ENCODE measurements at regions of chr12 and their contacts with region 1.

Region 1: GRCh38 chr12:31406345-31406744 is 80.4 kb upstream of the SINHCAF start:
- DNase-seq: peak; percentile 11
- ATAC-seq: no peak
- H3K4me3 ChIP-seq: no peak overlapping the region
- H3K27ac ChIP-seq: no peak overlapping the region
- H3K4me1 ChIP-seq: no peaks in the 10 kb centered on the region
- H3K27me3 ChIP-seq: no peaks in the 10 kb centered on the region
- CTCF ChIP-seq: no peak
- POLR2A ChIP-seq: no peak
- RAD21 ChIP-seq: no peak

Region 2: GRCh38 chr12:31245822-31246469 is 160.4 kb before region 1 on chr12:
- CTCF ChIA-PET with region 1: no interaction called
- POLR2A ChIA-PET with region 1: no interaction called
- dilution Hi-C with region 1: no loop called
- in situ Hi-C with region 1: no loop called
- intact Hi-C with region 1: loop called (anchors 2 kb)
- DNase-seq: no peak
- ATAC-seq: no peak
- H3K4me3 ChIP-seq: no peak overlapping the region
- H3K27ac ChIP-seq: no peak overlapping the region
- H3K4me1 ChIP-seq: no peaks in the 10 kb centered on the region
- H3K27me3 ChIP-seq: peaks cover 20% of the 10 kb centered on the region
- CTCF ChIP-seq: peak; percentile 13; the same call in 1 of the 2 replicates
- POLR2A ChIP-seq: no peak
- RAD21 ChIP-seq: no peak

Region 3: DNA sequence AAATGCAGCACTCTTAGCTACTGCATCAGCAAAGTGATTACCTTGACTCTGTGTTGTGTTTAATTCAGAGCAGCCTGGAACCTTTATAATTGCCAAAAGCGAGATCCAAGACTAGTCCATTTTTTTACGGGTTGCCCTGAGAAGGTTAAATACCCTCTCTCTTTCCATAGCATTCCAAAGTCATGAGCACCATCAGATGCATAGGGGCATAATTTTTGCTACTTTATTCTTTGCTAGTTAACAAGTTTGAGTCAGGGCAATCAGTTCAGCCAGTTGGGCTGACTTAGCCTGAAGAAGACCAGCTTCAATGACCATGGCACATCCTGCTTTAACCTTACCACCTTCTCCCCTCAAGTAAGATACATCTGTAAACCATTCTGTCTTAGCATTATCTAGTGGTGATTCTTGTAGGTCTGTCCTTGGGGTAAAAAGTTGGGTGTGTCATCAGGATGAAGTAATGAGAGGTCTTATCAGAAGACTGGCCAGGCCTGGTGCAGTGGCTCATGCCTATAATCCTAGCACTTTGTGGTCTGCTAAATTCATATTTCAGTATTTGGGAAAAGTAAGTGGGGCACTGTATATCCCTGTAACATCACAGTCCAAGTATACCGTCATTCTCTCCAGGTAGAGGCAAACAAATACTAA is 99.6 kb before region 1 on chr12:
- CTCF ChIA-PET with region 1: no interaction called
- POLR2A ChIA-PET with region 1: no interaction called
- dilution Hi-C with region 1: no loop called
- in situ Hi-C with region 1: no loop called
- intact Hi-C with region 1: no loop called
- DNase-seq: peak; percentile 7
- ATAC-seq: no peak
- H3K4me3 ChIP-seq: no peak overlapping the region
- H3K27ac ChIP-seq: no peak overlapping the region
- H3K4me1 ChIP-seq: no peaks in the 10 kb centered on the region
- H3K27me3 ChIP-seq: no peaks in the 10 kb centered on the region
- CTCF ChIP-seq: no peak
- POLR2A ChIP-seq: no peak
- RAD21 ChIP-seq: no peak

Region 4: GRCh38 chr12:31325877-31326631 is 80.3 kb before region 1 on chr12 and contains the start of gene SINHCAF:
- CTCF ChIA-PET with region 1: no interaction called
- POLR2A ChIA-PET with region 1: no interaction called
- dilution Hi-C with region 1: no loop called
- in situ Hi-C with region 1: no loop called
- intact Hi-C with region 1: loop called (anchors 2 kb)
- DNase-seq: peak; percentile 96
- ATAC-seq: peak; percentile 71
- H3K4me3 ChIP-seq: peak within 1 kb of the TSS; percentile 71
- H3K27ac ChIP-seq: peak within 1 kb of the TSS; percentile 79
- H3K4me1 ChIP-seq: no peaks in the 10 kb centered on the region; the same call in 1 of the 2 replicates
- H3K27me3 ChIP-seq: no peaks in the 10 kb centered on the region
- CTCF ChIP-seq: no peak
- POLR2A ChIP-seq: peak; percentile 79; the same call in 1 of the 2 replicates
- RAD21 ChIP-seq: no peak
- total RNA-seq, gene SINHCAF: 30.8 and 43.3 TPM in 2 replicates

Region 5: DNA sequence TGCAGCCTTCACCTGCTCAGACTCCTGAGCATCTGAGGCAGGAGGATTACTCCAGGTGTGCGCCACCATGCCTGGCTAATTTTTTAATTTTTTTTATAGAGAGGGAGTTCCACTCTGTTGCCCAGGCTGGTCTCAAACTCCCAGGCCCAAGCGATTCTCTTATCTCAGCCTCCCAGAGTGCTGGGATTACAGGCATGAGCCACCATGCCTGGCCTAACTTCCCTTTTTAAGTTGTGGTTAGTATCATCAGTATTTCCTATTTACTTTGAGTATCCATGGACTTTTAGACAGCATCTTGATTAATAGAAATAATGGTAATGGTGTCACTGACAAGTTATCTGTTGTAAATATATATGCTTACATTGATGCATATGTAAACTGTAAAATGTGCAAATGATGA is 1109.9 kb after region 1 on chr12:
- CTCF ChIA-PET with region 1: no interaction called
- POLR2A ChIA-PET with region 1: no interaction called
- dilution Hi-C with region 1: no loop called
- in situ Hi-C with region 1: no loop called
- intact Hi-C with region 1: no loop called
- DNase-seq: no peak
- ATAC-seq: no peak
- H3K4me3 ChIP-seq: no peak overlapping the region
- H3K27ac ChIP-seq: no peak overlapping the region
- H3K4me1 ChIP-seq: no peaks in the 10 kb centered on the region
- H3K27me3 ChIP-seq: peaks cover 6% of the 10 kb centered on the region
- CTCF ChIP-seq: no peak
- POLR2A ChIP-seq: no peak
- RAD21 ChIP-seq: no peak